MCF 10A (cell line): ENCODE measurements at regions of chr1 and their contacts with region 1.

Region 1: GRCh38 chr1:154220071-154220969 is at the start of gene UBAP2L:
- DNase-seq: peak; percentile 100
- H3K4me3 Mint-ChIP-seq: peak within 1 kb of the TSS; percentile 92
- H3K27ac Mint-ChIP-seq: peak within 1 kb of the TSS; percentile 99
- H3K4me1 Mint-ChIP-seq: peaks cover 49% of the 10 kb centered on the region
- H3K27me3 Mint-ChIP-seq: no peaks in the 10 kb centered on the region
- CTCF ChIP-seq: no peak
- total RNA-seq, gene UBAP2L: 219 and 223 TPM in 2 replicates

Region 2: DNA sequence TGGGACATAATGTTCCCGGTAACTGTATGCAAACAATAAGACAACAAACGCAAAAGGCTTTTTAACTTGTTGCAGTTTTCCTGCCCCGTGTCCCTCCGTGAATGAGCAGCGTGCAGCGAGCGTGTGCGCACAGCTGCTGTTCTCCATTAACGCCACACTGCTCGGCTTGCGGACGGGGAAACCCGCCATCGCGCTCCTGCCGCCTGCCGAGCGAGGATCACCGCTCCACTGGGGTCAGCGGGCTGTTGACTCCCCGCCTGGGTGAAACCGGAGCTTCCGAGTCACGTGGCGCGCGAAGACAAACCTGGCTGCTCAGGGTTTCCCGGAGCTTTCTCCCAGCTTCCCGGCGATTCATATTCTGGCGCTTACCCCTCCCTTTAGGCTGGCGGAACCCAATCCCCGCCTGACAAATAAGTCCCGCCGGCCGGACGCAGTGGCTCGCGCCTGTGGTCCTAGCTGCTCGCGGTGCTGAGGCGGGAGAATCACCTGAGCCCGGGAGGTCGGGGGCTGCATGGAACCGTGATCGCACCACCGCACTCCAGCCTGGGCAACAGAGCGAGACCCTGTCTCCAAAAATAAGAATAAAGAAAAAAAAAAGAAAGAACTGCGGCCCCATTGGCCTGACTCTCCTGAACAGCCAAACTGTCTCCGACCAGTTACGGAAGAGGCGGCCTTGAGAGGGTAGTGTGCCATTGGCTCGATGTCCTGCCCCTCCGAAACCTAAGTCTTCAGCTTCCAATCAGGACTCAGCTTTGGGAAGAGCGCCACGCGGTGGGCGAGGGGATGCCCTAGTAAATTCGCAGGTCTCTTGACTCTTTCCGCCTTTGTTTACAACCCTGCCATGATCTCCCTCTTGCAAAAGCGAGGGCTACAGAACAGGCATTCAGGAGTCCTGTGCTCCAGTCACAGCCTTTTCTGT is 253.0 kb before region 1 on chr1 and contains the start of gene CREB3L4:
- CTCF ChIA-PET with region 1: interaction called, 3 read pairs
- POLR2A ChIA-PET with region 1: interaction called, 13 read pairs
- intact Hi-C with region 1: no loop called
- DNase-seq: peak; percentile 100
- H3K4me3 Mint-ChIP-seq: peak within 1 kb of the TSS; percentile 95
- H3K27ac Mint-ChIP-seq: peak within 1 kb of the TSS; percentile 94
- H3K4me1 Mint-ChIP-seq: peaks cover 40% of the 10 kb centered on the region
- H3K27me3 Mint-ChIP-seq: no peaks in the 10 kb centered on the region
- CTCF ChIP-seq: peak; percentile 32
- total RNA-seq, gene CREB3L4: 14.7 and 17.6 TPM in 2 replicates

Region 3: GRCh38 chr1:154193821-154194220 is 26.5 kb before region 1 on chr1:
- CTCF ChIA-PET with region 1: interaction called, 29 read pairs
- POLR2A ChIA-PET with region 1: interaction called, 167 read pairs
- intact Hi-C with region 1: loop called (anchors 2 kb)
- DNase-seq: peak; percentile 87
- H3K4me3 Mint-ChIP-seq: no peak overlapping the region
- H3K27ac Mint-ChIP-seq: peak overlapping the region; percentile 81
- H3K4me1 Mint-ChIP-seq: peaks cover 19% of the 10 kb centered on the region
- H3K27me3 Mint-ChIP-seq: peaks cover 23% of the 10 kb centered on the region
- CTCF ChIP-seq: no peak

Region 4: GRCh38 chr1:154206196-154206595 is 14.1 kb before region 1 on chr1 and contains the start of gene CFAP141:
- CTCF ChIA-PET with region 1: interaction called, 14 read pairs
- POLR2A ChIA-PET with region 1: interaction called, 167 read pairs
- intact Hi-C with region 1: no loop called
- DNase-seq: no peak
- H3K4me3 Mint-ChIP-seq: no peak within 1 kb of the TSS
- H3K27ac Mint-ChIP-seq: peak within 1 kb of the TSS; percentile 8
- H3K4me1 Mint-ChIP-seq: no peaks in the 10 kb centered on the region
- H3K27me3 Mint-ChIP-seq: no peaks in the 10 kb centered on the region
- CTCF ChIP-seq: no peak
- total RNA-seq, gene CFAP141: not detected in 2 replicates

Region 5: DNA sequence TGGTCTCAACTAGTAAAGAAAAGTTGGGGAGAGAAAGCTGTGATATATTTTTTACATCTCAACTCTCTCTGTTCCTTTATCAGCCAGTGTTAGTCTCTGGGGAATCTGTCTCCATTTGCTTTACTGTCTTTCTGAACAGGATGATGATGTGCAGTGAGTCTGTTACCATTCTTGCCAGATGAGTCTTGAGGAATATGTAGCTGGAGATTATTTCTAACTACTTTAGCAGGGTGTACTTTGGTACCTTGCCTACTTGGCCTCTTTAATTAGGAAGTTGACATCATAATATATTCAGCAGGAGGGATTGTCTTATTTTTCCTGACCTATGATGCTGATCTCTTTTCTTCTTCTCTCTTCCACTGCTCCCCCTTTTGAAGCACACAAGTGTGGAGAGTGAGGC is 36.4 kb after region 1 on chr1:
- CTCF ChIA-PET with region 1: no interaction called
- POLR2A ChIA-PET with region 1: interaction called, 25 read pairs
- intact Hi-C with region 1: no loop called
- DNase-seq: no peak
- H3K4me3 Mint-ChIP-seq: no peak overlapping the region
- H3K27ac Mint-ChIP-seq: no peak overlapping the region
- H3K4me1 Mint-ChIP-seq: no peaks in the 10 kb centered on the region
- H3K27me3 Mint-ChIP-seq: no peaks in the 10 kb centered on the region
- CTCF ChIP-seq: no peak

Region 6: GRCh38 chr1:154501423-154502065 is 281.2 kb after region 1 on chr1:
- CTCF ChIA-PET with region 1: no interaction called
- POLR2A ChIA-PET with region 1: no interaction called
- intact Hi-C with region 1: no loop called
- DNase-seq: no peak
- H3K4me3 Mint-ChIP-seq: no peak overlapping the region
- H3K27ac Mint-ChIP-seq: no peak overlapping the region
- H3K4me1 Mint-ChIP-seq: no peaks in the 10 kb centered on the region
- H3K27me3 Mint-ChIP-seq: peaks cover 58% of the 10 kb centered on the region
- CTCF ChIP-seq: no peak